ENCODE measurements at regions of chr10 and their contacts with region 1.

Region 1: GRCh38 chr10:102815790-102816549 is 21.2 kb downstream of the CYP17A1 start:
- H3K4me3 Mint-ChIP-seq: peak overlapping the region; percentile 37
- H3K27ac Mint-ChIP-seq: peak overlapping the region; percentile 95
- H3K4me1 Mint-ChIP-seq: peaks cover 89% of the 10 kb centered on the region
- H3K27me3 Mint-ChIP-seq: no peaks in the 10 kb centered on the region

Region 2: GRCh38 chr10:102743588-102744373 is 72.2 kb before region 1 on chr10 and contains the start of gene WBP1L:
- intact Hi-C with region 1: loop called (anchors 5 kb)
- H3K4me3 Mint-ChIP-seq: peak within 1 kb of the TSS; percentile 95
- H3K27ac Mint-ChIP-seq: peak within 1 kb of the TSS; percentile 98
- H3K4me1 Mint-ChIP-seq: peaks cover 55% of the 10 kb centered on the region
- H3K27me3 Mint-ChIP-seq: peaks cover 2% of the 10 kb centered on the region

Region 3: DNA sequence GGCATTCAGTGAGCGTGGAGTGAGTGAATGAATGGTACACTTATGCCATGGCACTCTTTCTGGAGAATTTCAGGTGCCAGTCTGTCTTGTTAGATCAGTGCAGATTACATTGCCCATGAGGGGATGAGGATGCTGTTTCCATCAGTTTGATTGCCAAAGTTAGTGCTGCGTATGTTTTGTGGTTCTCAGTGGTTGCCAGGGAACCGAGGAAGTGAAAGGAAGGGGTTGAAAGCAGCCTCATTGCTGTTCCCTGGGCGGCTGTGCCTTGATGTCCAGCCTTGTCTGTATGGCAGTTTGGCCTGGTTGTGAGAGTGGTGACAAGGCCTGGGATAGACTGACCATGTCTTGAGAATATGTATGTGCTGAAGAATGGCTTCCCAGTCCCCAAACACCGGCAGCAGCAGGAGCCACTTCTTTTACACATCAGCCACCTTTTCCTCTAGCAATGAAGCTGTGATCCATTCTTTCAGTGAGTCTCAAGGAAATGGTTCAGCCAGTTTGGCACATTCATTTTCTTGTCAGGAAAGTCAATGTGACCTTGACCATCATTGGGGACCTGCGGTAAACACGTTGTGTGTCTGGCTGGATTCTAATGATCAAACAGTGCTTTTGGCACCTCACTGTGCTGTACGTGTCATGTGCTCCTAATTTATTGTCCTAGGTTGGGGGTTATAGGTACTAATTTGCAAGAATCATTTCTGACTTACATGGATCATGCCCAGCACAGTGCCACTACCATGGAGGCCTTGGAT is 41.8 kb before region 1 on chr10:
- intact Hi-C with region 1: loop called (anchors 5 kb)
- H3K4me3 Mint-ChIP-seq: no peak overlapping the region
- H3K27ac Mint-ChIP-seq: peak overlapping the region; percentile 87
- H3K4me1 Mint-ChIP-seq: peaks cover 64% of the 10 kb centered on the region
- H3K27me3 Mint-ChIP-seq: no peaks in the 10 kb centered on the region